Activated CD8-positive, alpha-beta T cell treated with anti-CD3 and anti-CD28 coated beads for 36 hours (primary cell): ENCODE measurements at regions of chr13 and their contacts with region 1.

Region 1: GRCh38 chr13:99322297-99323103 is 15.3 kb upstream of the GPR183 start:
- DNase-seq: peak; percentile 70
- ATAC-seq: peak; percentile 78
- H3K4me3 Mint-ChIP-seq: peak overlapping the region; percentile 47
- H3K27ac Mint-ChIP-seq: peak overlapping the region; percentile 94
- H3K4me1 Mint-ChIP-seq: peaks cover 77% of the 10 kb centered on the region
- H3K27me3 Mint-ChIP-seq: no peaks in the 10 kb centered on the region
- CTCF ChIP-seq: no peak

Region 2: GRCh38 chr13:99288089-99288488 is 34.4 kb before region 1 on chr13:
- CTCF ChIA-PET with region 1: interaction called, 4 read pairs
- POLR2A ChIA-PET with region 1: interaction called, 3 read pairs
- intact Hi-C with region 1: loop called (anchors 5 kb)
- DNase-seq: peak; percentile 88
- ATAC-seq: peak; percentile 85
- H3K4me3 Mint-ChIP-seq: peak overlapping the region; percentile 49
- H3K27ac Mint-ChIP-seq: peak overlapping the region; percentile 85
- H3K4me1 Mint-ChIP-seq: peaks cover 74% of the 10 kb centered on the region
- H3K27me3 Mint-ChIP-seq: no peaks in the 10 kb centered on the region
- CTCF ChIP-seq: no peak

Region 3: GRCh38 chr13:99307648-99308339 is 14.7 kb before region 1 on chr13:
- CTCF ChIA-PET with region 1: interaction called, 8 read pairs
- POLR2A ChIA-PET with region 1: interaction called, 11 read pairs
- intact Hi-C with region 1: no loop called
- DNase-seq: peak; percentile 86
- ATAC-seq: peak; percentile 86
- H3K4me3 Mint-ChIP-seq: peak overlapping the region; percentile 76
- H3K27ac Mint-ChIP-seq: peak overlapping the region; percentile 93
- H3K4me1 Mint-ChIP-seq: peaks cover 85% of the 10 kb centered on the region
- H3K27me3 Mint-ChIP-seq: no peaks in the 10 kb centered on the region
- CTCF ChIP-seq: no peak

Region 4: GRCh38 chr13:99356158-99357091 is 33.9 kb after region 1 on chr13:
- CTCF ChIA-PET with region 1: interaction called, 5 read pairs
- POLR2A ChIA-PET with region 1: interaction called, 11 read pairs
- intact Hi-C with region 1: loop called (anchors 2 kb)
- DNase-seq: peak; percentile 71
- ATAC-seq: peak; percentile 53
- H3K4me3 Mint-ChIP-seq: peak overlapping the region; percentile 56
- H3K27ac Mint-ChIP-seq: peak overlapping the region; percentile 93
- H3K4me1 Mint-ChIP-seq: peaks cover 97% of the 10 kb centered on the region
- H3K27me3 Mint-ChIP-seq: no peaks in the 10 kb centered on the region
- CTCF ChIP-seq: no peak

Region 5: DNA sequence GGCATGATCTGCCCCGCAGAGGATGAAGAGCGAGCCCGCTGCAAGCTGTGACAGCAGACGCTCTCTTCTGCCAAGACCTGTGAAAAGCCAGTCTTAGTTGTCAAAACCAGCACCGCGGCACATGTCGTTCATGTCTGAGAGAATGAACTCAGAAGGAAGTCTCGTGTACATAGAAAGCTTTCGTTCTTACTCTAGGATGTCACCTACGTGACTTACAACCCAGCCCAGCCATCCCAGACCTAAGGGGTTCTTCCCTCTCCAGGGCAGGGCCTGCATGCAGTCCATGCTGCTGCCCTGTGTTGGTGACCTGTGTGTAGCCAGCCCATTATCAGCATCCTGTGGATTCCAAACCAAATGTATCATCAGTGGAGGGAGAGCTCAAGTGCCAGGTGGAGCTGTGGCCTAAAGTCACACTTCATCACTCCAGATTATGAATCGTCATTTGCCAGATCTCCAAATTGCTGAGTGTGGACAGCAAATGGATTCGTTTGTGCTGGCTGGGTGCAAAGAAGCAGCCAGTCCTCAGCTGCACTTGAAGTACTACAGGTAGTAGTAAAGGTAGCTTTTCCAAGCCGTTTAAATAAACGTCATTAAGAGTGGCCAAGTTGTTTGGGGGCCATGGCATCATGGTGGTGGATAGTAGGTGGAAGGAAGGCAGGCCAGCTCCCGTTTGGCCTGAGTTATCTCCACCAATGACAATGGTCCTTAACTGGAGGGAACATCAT is 58.6 kb after region 1 on chr13:
- CTCF ChIA-PET with region 1: interaction called, 3 read pairs
- POLR2A ChIA-PET with region 1: interaction called, 8 read pairs
- intact Hi-C with region 1: loop called (anchors 2 kb)
- DNase-seq: peak; percentile 90
- ATAC-seq: peak; percentile 68
- H3K4me3 Mint-ChIP-seq: no peak overlapping the region
- H3K27ac Mint-ChIP-seq: peak overlapping the region; percentile 86
- H3K4me1 Mint-ChIP-seq: peaks cover 89% of the 10 kb centered on the region
- H3K27me3 Mint-ChIP-seq: no peaks in the 10 kb centered on the region
- CTCF ChIP-seq: no peak